ENCODE measurements at regions of chr9 and their contacts with region 1.

Region 1: GRCh38 chr9:34603610-34604231 is 8.2 kb downstream of the RPP25L start:
- DNase-seq: peak; percentile 88
- H3K4me3 ChIP-seq: no peak overlapping the region; a peak in 1 of 4 replicates
- H3K27ac ChIP-seq: no peak overlapping the region
- H3K4me1 ChIP-seq: peaks cover 0 to 7% of the 10 kb centered on the region in 2 experiments; a peak in 1 of 4 replicates
- H3K27me3 ChIP-seq: no peaks in the 10 kb centered on the region
- CTCF ChIP-seq: peak; percentile 94
- EP300 ChIP-seq: no peak
- RAD21 ChIP-seq: peak; percentile 97

Region 2: DNA sequence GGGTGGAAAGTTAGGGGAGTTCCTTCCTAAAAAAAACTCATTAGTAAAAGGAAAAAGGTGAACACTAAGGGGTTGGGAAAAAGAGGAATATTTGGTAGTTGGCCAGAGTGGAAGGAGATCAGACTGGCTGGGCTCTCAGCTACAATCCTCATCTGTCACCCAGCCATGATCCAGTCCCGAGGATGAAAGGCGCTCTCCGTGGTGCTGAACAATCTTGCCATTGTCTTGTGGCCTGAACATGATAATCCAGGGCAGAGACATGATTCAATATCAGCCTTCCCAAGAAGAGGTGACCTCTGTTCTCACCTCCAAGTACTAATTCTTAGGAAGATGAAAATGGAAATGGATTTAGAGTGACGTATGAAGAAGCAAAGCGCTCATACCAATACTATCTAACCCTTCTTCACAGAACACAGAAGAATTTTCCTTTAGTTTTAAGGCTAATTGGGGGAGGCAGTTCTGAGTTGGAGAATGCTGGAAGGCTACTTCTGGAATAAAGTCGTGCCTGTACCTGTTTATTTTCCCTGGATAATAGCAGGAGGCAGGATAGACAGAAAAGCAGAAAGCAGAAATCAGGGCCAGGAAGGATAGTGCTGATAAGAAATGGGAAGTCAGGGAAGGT is 190.4 kb before region 1 on chr9:
- CTCF ChIA-PET with region 1: interaction called, 11 read pairs
- POLR2A ChIA-PET with region 1: no interaction called
- DNase-seq: no peak
- H3K4me3 ChIP-seq: no peak overlapping the region
- H3K27ac ChIP-seq: no peak overlapping the region
- H3K4me1 ChIP-seq: peaks cover 0 to 12% of the 10 kb centered on the region in 2 experiments; a peak in 1 of 4 replicates
- H3K27me3 ChIP-seq: no peaks in the 10 kb centered on the region
- CTCF ChIP-seq: no peak
- EP300 ChIP-seq: no peak
- RAD21 ChIP-seq: no peak

Region 3: GRCh38 chr9:34513567-34514214 is 90.0 kb before region 1 on chr9:
- CTCF ChIA-PET with region 1: interaction called, 21 read pairs
- POLR2A ChIA-PET with region 1: no interaction called
- DNase-seq: no peak
- H3K4me3 ChIP-seq: no peak overlapping the region
- H3K27ac ChIP-seq: no peak overlapping the region
- H3K4me1 ChIP-seq: peaks cover 0 to 16% of the 10 kb centered on the region in 2 experiments; a peak in 1 of 4 replicates
- H3K27me3 ChIP-seq: no peaks in the 10 kb centered on the region; the same call in 1 of the 2 replicates
- CTCF ChIP-seq: no peak
- EP300 ChIP-seq: no peak
- RAD21 ChIP-seq: no peak

Region 4: GRCh38 chr9:34570376-34570775 is 33.3 kb before region 1 on chr9:
- CTCF ChIA-PET with region 1: interaction called, 11 read pairs
- POLR2A ChIA-PET with region 1: no interaction called
- DNase-seq: peak; percentile 78
- H3K4me3 ChIP-seq: no peak overlapping the region
- H3K27ac ChIP-seq: peak overlapping the region in 1 of 2 experiments; percentile 94; a peak in 2 of 4 replicates
- H3K4me1 ChIP-seq: peaks cover 0 to 98% of the 10 kb centered on the region in 2 experiments; a peak in 2 of 4 replicates
- H3K27me3 ChIP-seq: no peaks in the 10 kb centered on the region; the same call in 1 of the 2 replicates
- CTCF ChIP-seq: no peak
- EP300 ChIP-seq: no peak; a peak in 1 of 4 replicates
- RAD21 ChIP-seq: no peak

Region 5: GRCh38 chr9:34628656-34629491 is 25.2 kb after region 1 on chr9 and contains the start of gene ARID3C:
- CTCF ChIA-PET with region 1: interaction called, 71 read pairs
- POLR2A ChIA-PET with region 1: no interaction called
- DNase-seq: peak; percentile 84
- H3K4me3 ChIP-seq: peak within 1 kb of the TSS; percentile 44 to 52
- H3K27ac ChIP-seq: no peak within 1 kb of the TSS
- H3K4me1 ChIP-seq: peaks cover 0 to 8% of the 10 kb centered on the region in 2 experiments; a peak in 1 of 4 replicates
- H3K27me3 ChIP-seq: peaks cover 21% of the 10 kb centered on the region; the same call in 1 of the 2 replicates
- CTCF ChIP-seq: no peak
- EP300 ChIP-seq: no peak
- RAD21 ChIP-seq: no peak
- polyA plus RNA-seq, gene ARID3C: 0.08 and 0.11 TPM in 2 replicates

Region 6: DNA sequence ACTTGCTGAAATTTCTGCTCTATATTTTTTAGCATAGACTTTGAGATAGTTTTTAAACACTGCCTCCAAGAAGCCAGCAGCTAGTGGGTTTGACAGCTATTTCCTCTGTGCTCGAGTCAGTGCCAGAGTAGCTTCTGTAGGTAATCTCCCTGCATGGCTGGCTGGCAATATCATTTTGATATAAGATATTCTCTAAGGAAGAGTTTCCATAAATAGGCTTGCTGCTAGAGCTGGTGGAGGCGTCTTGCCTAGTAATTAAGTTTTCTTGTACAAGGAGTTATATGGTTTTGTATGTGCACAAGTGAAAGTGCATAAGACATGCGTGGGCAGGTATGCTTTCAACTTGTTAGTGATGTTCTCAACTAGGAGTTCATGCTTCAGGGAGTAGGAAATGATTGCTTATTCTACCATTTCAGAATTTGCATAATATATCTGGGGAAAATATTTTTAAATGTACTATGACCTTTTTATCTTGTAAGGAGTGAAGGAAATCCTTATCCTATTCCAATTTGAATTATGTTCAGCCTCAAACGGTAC is 180.3 kb after region 1 on chr9:
- CTCF ChIA-PET with region 1: no interaction called
- POLR2A ChIA-PET with region 1: no interaction called
- DNase-seq: no peak
- H3K4me3 ChIP-seq: no peak overlapping the region
- H3K27ac ChIP-seq: no peak overlapping the region
- H3K4me1 ChIP-seq: no peaks in the 10 kb centered on the region
- H3K27me3 ChIP-seq: peaks cover 8% of the 10 kb centered on the region; the same call in 1 of the 2 replicates
- CTCF ChIP-seq: no peak
- EP300 ChIP-seq: no peak
- RAD21 ChIP-seq: no peak

Measured in SK-N-SH (cell line).